ENCODE measurements at regions of chr3 and their contacts with region 1.

Region 1: DNA sequence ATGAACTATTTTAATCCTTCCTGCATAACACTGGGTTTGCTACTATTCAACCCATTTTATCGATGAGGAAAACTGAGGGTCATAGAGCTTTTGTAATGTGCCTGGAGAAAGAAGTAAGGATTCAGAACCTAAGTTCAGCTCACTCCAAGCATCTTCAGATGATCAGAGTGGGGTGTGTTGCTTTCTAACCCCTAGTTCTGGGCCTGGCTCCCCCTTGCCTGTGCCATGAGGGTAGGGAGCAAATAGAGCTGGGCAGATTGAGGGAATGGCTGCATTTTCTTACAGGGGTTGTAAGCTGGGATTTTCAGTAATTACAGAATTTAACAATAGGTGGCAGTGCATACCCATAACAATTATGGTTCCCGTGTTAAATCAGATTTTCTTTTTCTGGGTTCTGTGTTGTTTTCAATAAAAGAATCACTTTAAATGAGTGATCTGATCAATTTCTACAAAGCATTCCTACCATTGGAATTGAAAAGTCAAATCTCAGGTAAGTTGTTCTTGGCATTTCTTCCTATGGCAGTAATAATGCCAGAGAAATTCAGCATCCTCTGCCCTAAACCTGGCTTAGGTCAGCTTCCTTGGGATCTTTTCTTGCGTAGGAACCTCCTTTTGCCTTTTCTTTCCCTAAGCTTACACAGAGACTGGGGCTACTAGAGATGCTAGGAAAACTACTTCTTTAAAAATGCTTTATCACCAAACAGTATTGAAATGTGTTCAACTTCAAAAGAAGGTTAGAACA is 103.8 kb upstream of the IL12A start:
- DNase-seq: no peak
- ATAC-seq: peak; percentile 80
- H3K4me3 ChIP-seq: no peak overlapping the region
- H3K27ac ChIP-seq: no peak overlapping the region
- H3K4me1 ChIP-seq: no peaks in the 10 kb centered on the region
- H3K27me3 ChIP-seq: no peaks in the 10 kb centered on the region
- CTCF ChIP-seq: peak; percentile 40 to 72 (median 56); a peak in 5 of 6 replicates
- EP300 ChIP-seq: no peak
- POLR2A ChIP-seq: no peak
- RAD21 ChIP-seq: peak; percentile 75

Region 2: DNA sequence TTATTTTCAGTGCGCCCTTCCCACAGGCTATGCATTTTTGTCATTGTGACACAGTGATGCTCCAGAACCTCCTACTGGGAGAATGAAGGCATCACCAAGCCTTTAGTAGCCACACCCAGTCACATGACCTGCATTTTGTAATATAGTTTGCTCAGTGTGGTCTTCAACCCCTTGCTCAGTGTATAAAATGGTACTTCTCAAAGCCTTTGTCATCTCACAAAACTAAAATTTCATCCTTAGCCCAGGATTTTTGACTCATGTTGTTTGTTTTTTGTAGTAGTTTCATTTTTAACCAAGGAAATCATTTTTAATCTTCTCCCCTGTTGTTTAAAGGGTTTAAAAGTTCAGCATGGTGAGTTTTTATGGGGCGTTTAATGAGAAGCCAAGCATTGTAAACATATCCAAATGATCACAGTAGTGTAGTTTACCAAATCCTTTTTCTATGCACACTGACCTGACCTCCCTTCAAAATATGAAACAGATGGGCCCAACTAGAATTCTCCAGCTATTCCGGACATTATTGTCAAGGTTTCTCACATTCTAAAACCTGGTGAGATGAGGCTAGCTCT is 19.7 kb before region 1 on chr3:
- CTCF ChIA-PET with region 1: interaction called, 35 read pairs
- POLR2A ChIA-PET with region 1: no interaction called
- RAD21 ChIA-PET with region 1: interaction called, 9 read pairs
- SMC1A ChIA-PET with region 1: interaction called, 62 read pairs
- in situ Hi-C with region 1: no loop called
- intact Hi-C with region 1: no loop called
- DNase-seq: no peak
- ATAC-seq: no peak
- H3K4me3 ChIP-seq: no peak overlapping the region
- H3K27ac ChIP-seq: no peak overlapping the region
- H3K4me1 ChIP-seq: peaks cover 22% of the 10 kb centered on the region
- H3K27me3 ChIP-seq: no peaks in the 10 kb centered on the region
- CTCF ChIP-seq: no peak
- EP300 ChIP-seq: no peak
- POLR2A ChIP-seq: no peak
- RAD21 ChIP-seq: no peak

Region 3: DNA sequence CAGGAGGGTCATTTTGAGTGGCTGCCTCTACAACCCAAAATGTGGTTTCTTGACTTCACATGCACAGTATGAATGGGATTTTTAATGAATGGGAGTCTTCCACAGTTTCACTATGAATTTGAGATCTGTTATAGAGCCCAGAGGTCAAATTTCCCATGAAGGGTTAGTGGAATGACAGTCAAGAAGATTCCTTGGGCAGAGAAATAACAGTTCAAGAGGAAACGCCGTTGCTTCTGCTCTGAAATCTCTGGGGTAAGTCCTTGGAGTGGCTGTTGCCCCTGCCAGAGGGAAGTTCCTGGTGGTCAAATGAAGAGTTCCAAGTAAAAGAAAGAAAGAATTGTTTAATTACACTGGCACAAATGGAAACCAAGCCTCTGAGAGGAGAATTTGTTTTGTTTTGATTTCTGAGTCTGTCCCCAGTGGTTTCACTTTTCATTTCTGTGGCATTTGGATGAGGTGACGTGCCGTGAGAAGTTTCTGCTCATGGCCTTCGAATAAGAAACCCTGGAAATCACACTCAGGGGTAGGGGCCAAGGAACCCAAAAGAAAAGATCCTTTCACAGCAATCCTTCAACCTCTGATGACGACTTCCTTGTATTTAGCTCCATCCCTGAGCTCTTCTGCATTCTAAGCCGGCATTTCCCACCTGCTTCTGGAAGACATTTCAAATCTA is 26.3 kb after region 1 on chr3:
- CTCF ChIA-PET with region 1: interaction called, 152 read pairs
- POLR2A ChIA-PET with region 1: no interaction called
- RAD21 ChIA-PET with region 1: interaction called, 8 read pairs
- SMC1A ChIA-PET with region 1: interaction called, 168 read pairs
- in situ Hi-C with region 1: no loop called
- intact Hi-C with region 1: no loop called
- DNase-seq: no peak
- ATAC-seq: peak; percentile 90
- H3K4me3 ChIP-seq: peak overlapping the region; percentile 52; the same call in 1 of the 2 replicates
- H3K27ac ChIP-seq: peak overlapping the region; percentile 62
- H3K4me1 ChIP-seq: peaks cover 8% of the 10 kb centered on the region; the same call in 1 of the 2 replicates
- H3K27me3 ChIP-seq: no peaks in the 10 kb centered on the region
- CTCF ChIP-seq: 0 out of 6 replicates have a peak, but pooled peaks of 1 of the 3 experiments have one; percentile 1
- EP300 ChIP-seq: no peak
- POLR2A ChIP-seq: no peak
- RAD21 ChIP-seq: no peak

Region 4: GRCh38 chr3:159978353-159978752 is 93.5 kb after region 1 on chr3:
- CTCF ChIA-PET with region 1: interaction called, 73 read pairs
- POLR2A ChIA-PET with region 1: no interaction called
- RAD21 ChIA-PET with region 1: interaction called, 23 read pairs
- SMC1A ChIA-PET with region 1: interaction called, 20 read pairs
- in situ Hi-C with region 1: no loop called
- intact Hi-C with region 1: no loop called
- DNase-seq: no peak
- ATAC-seq: peak; percentile 92
- H3K4me3 ChIP-seq: no peak overlapping the region
- H3K27ac ChIP-seq: no peak overlapping the region
- H3K4me1 ChIP-seq: no peaks in the 10 kb centered on the region
- H3K27me3 ChIP-seq: no peaks in the 10 kb centered on the region
- CTCF ChIP-seq: no peak
- EP300 ChIP-seq: no peak
- POLR2A ChIP-seq: no peak
- RAD21 ChIP-seq: no peak

Region 5: GRCh38 chr3:160012108-160012507 is 127.3 kb after region 1 on chr3:
- CTCF ChIA-PET with region 1: interaction called, 843 read pairs
- POLR2A ChIA-PET with region 1: no interaction called
- RAD21 ChIA-PET with region 1: interaction called, 387 read pairs
- SMC1A ChIA-PET with region 1: interaction called, 589 read pairs
- in situ Hi-C with region 1: no loop called
- intact Hi-C with region 1: no loop called
- DNase-seq: peak; percentile 81
- ATAC-seq: peak; percentile 83
- H3K4me3 ChIP-seq: peak overlapping the region; percentile 22; the same call in 1 of the 2 replicates
- H3K27ac ChIP-seq: peak overlapping the region; percentile 94
- H3K4me1 ChIP-seq: peaks cover 48% of the 10 kb centered on the region
- H3K27me3 ChIP-seq: no peaks in the 10 kb centered on the region
- CTCF ChIP-seq: no peak
- EP300 ChIP-seq: peak; percentile 87 to 95; a peak in 3 of 4 replicates
- POLR2A ChIP-seq: no peak
- RAD21 ChIP-seq: no peak

Region 6: DNA sequence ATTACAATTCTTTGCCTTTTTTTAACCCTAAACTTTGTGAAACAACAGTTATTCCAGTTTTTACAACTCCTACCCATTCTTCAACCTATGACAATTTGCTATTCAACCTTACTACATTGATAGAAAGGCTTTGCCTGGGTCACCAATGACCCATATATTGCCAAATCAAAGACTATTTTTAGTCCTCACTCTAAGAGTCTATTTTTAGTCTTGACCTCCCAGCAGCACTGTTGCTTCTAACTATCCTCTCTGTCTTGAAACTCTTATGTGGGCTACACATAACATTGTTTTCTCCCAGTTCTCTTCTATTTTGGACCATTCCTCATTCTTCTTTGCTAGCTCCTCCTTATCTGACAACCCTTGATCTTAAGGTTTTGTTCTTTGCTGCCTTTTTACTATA is 411.8 kb after region 1 on chr3:
- CTCF ChIA-PET with region 1: no interaction called
- POLR2A ChIA-PET with region 1: no interaction called
- RAD21 ChIA-PET with region 1: no interaction called
- SMC1A ChIA-PET with region 1: no interaction called
- in situ Hi-C with region 1: no loop called
- intact Hi-C with region 1: no loop called
- DNase-seq: no peak
- ATAC-seq: no peak
- H3K4me3 ChIP-seq: no peak overlapping the region
- H3K27ac ChIP-seq: no peak overlapping the region
- H3K4me1 ChIP-seq: no peaks in the 10 kb centered on the region
- H3K27me3 ChIP-seq: no peaks in the 10 kb centered on the region
- CTCF ChIP-seq: no peak
- EP300 ChIP-seq: no peak
- POLR2A ChIP-seq: no peak
- RAD21 ChIP-seq: no peak

Region 7: GRCh38 chr3:160343132-160343531 is 458.3 kb after region 1 on chr3:
- CTCF ChIA-PET with region 1: interaction called, 12 read pairs
- POLR2A ChIA-PET with region 1: no interaction called
- RAD21 ChIA-PET with region 1: interaction called, 5 read pairs
- SMC1A ChIA-PET with region 1: interaction called, 11 read pairs
- in situ Hi-C with region 1: no loop called
- intact Hi-C with region 1: loop called (anchors 2 kb)
- DNase-seq: no peak
- ATAC-seq: no peak
- H3K4me3 ChIP-seq: no peak overlapping the region
- H3K27ac ChIP-seq: no peak overlapping the region
- H3K4me1 ChIP-seq: no peaks in the 10 kb centered on the region
- H3K27me3 ChIP-seq: no peaks in the 10 kb centered on the region
- CTCF ChIP-seq: peak in 2 of 3 experiments; percentile 7 to 47; a peak in 2 of 6 replicates
- EP300 ChIP-seq: no peak
- POLR2A ChIP-seq: no peak
- RAD21 ChIP-seq: peak; percentile 61